Activated B cell treated with CpG ODN at 0.5 μM for 24 hours (primary cell): ENCODE measurements at regions of chr10 and their contacts with region 1.

Region 1: GRCh38 chr10:6088721-6089390 is at the start of gene RBM17:
- DNase-seq: peak; percentile 99
- ATAC-seq: peak; percentile 85
- H3K4me3 Mint-ChIP-seq: peak within 1 kb of the TSS; percentile 97
- H3K27ac Mint-ChIP-seq: peak within 1 kb of the TSS; percentile 87
- H3K4me1 Mint-ChIP-seq: peaks cover 69% of the 10 kb centered on the region
- H3K27me3 Mint-ChIP-seq: no peaks in the 10 kb centered on the region
- CTCF ChIP-seq: peak; percentile 99
- total RNA-seq, gene RBM17: 207 and 209 TPM in 2 replicates

Region 2: GRCh38 chr10:5889624-5890451 is 199.0 kb before region 1 on chr10 and contains the starts of genes ANKRD16 and FBH1:
- CTCF ChIA-PET with region 1: no interaction called
- POLR2A ChIA-PET with region 1: interaction called, 4 read pairs
- intact Hi-C with region 1: loop called (anchors 1 kb)
- DNase-seq: peak; percentile 100
- ATAC-seq: peak; percentile 85
- H3K4me3 Mint-ChIP-seq: peak within 1 kb of the TSS; percentile 87
- H3K27ac Mint-ChIP-seq: peak within 1 kb of the TSS; percentile 78
- H3K4me1 Mint-ChIP-seq: peaks cover 59% of the 10 kb centered on the region
- H3K27me3 Mint-ChIP-seq: no peaks in the 10 kb centered on the region
- CTCF ChIP-seq: no peak
- total RNA-seq, gene ANKRD16: 9.2 and 11.1 TPM in 2 replicates
- total RNA-seq, gene FBH1: 65.5 and 68.7 TPM in 2 replicates

Region 3: GRCh38 chr10:6014241-6014761 is 74.6 kb before region 1 on chr10:
- CTCF ChIA-PET with region 1: interaction called, 40 read pairs
- POLR2A ChIA-PET with region 1: no interaction called
- intact Hi-C with region 1: loop called (anchors 1 kb)
- DNase-seq: no peak
- ATAC-seq: peak; percentile 66
- H3K4me3 Mint-ChIP-seq: no peak overlapping the region
- H3K27ac Mint-ChIP-seq: peak overlapping the region; percentile 78
- H3K4me1 Mint-ChIP-seq: peaks cover 22% of the 10 kb centered on the region
- H3K27me3 Mint-ChIP-seq: no peaks in the 10 kb centered on the region
- CTCF ChIP-seq: no peak

Region 4: GRCh38 chr10:6062101-6062771 is 26.6 kb before region 1 on chr10 and contains the start of gene IL2RA:
- CTCF ChIA-PET with region 1: interaction called, 79 read pairs
- POLR2A ChIA-PET with region 1: interaction called, 28 read pairs
- intact Hi-C with region 1: loop called (anchors 1 kb)
- DNase-seq: peak; percentile 52
- ATAC-seq: peak; percentile 70
- H3K4me3 Mint-ChIP-seq: peak within 1 kb of the TSS; percentile 97
- H3K27ac Mint-ChIP-seq: peak within 1 kb of the TSS; percentile 93
- H3K4me1 Mint-ChIP-seq: peaks cover 75% of the 10 kb centered on the region
- H3K27me3 Mint-ChIP-seq: no peaks in the 10 kb centered on the region
- CTCF ChIP-seq: no peak
- total RNA-seq, gene IL2RA: 151 and 160 TPM in 2 replicates

Region 5: GRCh38 chr10:6074489-6075301 is 14.2 kb before region 1 on chr10:
- CTCF ChIA-PET with region 1: interaction called, 79 read pairs
- POLR2A ChIA-PET with region 1: interaction called, 35 read pairs
- intact Hi-C with region 1: loop called (anchors 1 kb)
- DNase-seq: no peak
- ATAC-seq: no peak
- H3K4me3 Mint-ChIP-seq: no peak overlapping the region
- H3K27ac Mint-ChIP-seq: no peak overlapping the region
- H3K4me1 Mint-ChIP-seq: peaks cover 50% of the 10 kb centered on the region
- H3K27me3 Mint-ChIP-seq: no peaks in the 10 kb centered on the region
- CTCF ChIP-seq: no peak

Region 6: GRCh38 chr10:6163364-6164270 is 74.8 kb after region 1 on chr10:
- CTCF ChIA-PET with region 1: no interaction called
- POLR2A ChIA-PET with region 1: interaction called, 3 read pairs
- intact Hi-C with region 1: loop called (anchors 2 kb)
- DNase-seq: peak; percentile 90
- ATAC-seq: peak; percentile 98
- H3K4me3 Mint-ChIP-seq: peak overlapping the region; percentile 96
- H3K27ac Mint-ChIP-seq: peak overlapping the region; percentile 97
- H3K4me1 Mint-ChIP-seq: peaks cover 34% of the 10 kb centered on the region
- H3K27me3 Mint-ChIP-seq: no peaks in the 10 kb centered on the region
- CTCF ChIP-seq: no peak